ENCODE measurements at regions of chr1 and their contacts with region 1.

Region 1: GRCh38 chr1:185144233-185144632 is 12.5 kb downstream of the TRMT1L start:
- DNase-seq: no peak
- ATAC-seq: no peak
- H3K4me3 ChIP-seq: no peak overlapping the region
- H3K27ac ChIP-seq: no peak overlapping the region
- H3K4me1 ChIP-seq: no peaks in the 10 kb centered on the region
- H3K27me3 ChIP-seq: no peaks in the 10 kb centered on the region
- CTCF ChIP-seq: no peak

Region 2: GRCh38 chr1:186325239-186325638 is 1181.0 kb after region 1 on chr1:
- intact Hi-C with region 1: loop called in 1 of 2 experiments (anchors 10 kb)
- DNase-seq: no peak
- ATAC-seq: no peak
- H3K4me3 ChIP-seq: no peak overlapping the region
- H3K27ac ChIP-seq: no peak overlapping the region
- H3K4me1 ChIP-seq: no peaks in the 10 kb centered on the region
- H3K27me3 ChIP-seq: no peaks in the 10 kb centered on the region
- CTCF ChIP-seq: no peak

Measured in psoas muscle (tissue), 8 donors.